CD4-positive, alpha-beta memory T cell (primary cell): ENCODE measurements at regions of chr13 and their contacts with region 1.

Region 1: GRCh38 chr13:41456768-41457588 is at the start of gene RGCC:
- DNase-seq: peak; percentile 96 to 97 (median 97)
- H3K4me3 ChIP-seq: peak within 1 kb of the TSS; percentile 61 to 99
- H3K4me3 Mint-ChIP-seq: peak within 1 kb of the TSS; percentile 90 to 99 (median 94)
- H3K27ac ChIP-seq: peak within 1 kb of the TSS; percentile 93
- H3K27ac Mint-ChIP-seq: peak within 1 kb of the TSS; percentile 96 to 99 (median 97)
- H3K4me1 ChIP-seq: peaks cover 38% of the 10 kb centered on the region
- H3K4me1 Mint-ChIP-seq: peaks cover 28 to 53% (median 41%) of the 10 kb centered on the region in 4 donors
- H3K27me3 ChIP-seq: no peaks in the 10 kb centered on the region
- H3K27me3 Mint-ChIP-seq: no peaks in the 10 kb centered on the region
- total RNA-seq, gene RGCC: 146 to 154 TPM

Region 2: DNA sequence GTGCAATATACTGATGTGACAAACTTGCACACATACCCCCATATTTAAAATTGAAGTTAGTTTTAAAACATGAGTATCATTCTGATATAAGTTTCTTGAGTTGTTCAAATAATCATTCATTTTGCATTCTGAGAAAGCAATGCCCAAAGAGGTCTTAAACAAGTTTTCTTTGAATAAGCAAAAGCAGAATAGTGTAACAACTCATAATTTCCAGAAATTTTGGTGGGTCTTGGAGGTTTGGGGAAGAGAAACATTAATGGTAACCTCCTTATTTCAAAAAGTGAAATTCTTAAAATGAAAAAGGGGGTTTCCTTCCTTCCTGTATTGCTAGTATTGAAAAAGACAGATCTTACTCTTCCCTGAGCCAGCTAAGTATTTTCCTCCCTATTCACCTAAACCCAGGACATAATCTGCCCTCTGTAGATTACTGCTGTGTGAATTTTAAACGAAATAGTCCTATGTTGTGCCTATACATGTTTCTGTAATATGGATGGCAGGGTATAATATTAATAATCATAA is 637.1 kb before region 1 on chr13:
- CTCF ChIA-PET with region 1: no interaction called
- POLR2A ChIA-PET with region 1: no interaction called
- intact Hi-C with region 1: no loop called
- DNase-seq: no peak
- H3K4me3 ChIP-seq: no peak overlapping the region
- H3K4me3 Mint-ChIP-seq: no peak overlapping the region
- H3K27ac ChIP-seq: no peak overlapping the region
- H3K27ac Mint-ChIP-seq: no peak overlapping the region
- H3K4me1 ChIP-seq: no peaks in the 10 kb centered on the region
- H3K4me1 Mint-ChIP-seq: peaks cover 0 to 4% (median 0%) of the 10 kb centered on the region in 4 donors
- H3K27me3 ChIP-seq: no peaks in the 10 kb centered on the region
- H3K27me3 Mint-ChIP-seq: no peaks in the 10 kb centered on the region

Region 3: GRCh38 chr13:41263261-41264027 is 193.5 kb before region 1 on chr13 and contains the start of gene MTRF1:
- CTCF ChIA-PET with region 1: no interaction called
- POLR2A ChIA-PET with region 1: no interaction called
- intact Hi-C with region 1: loop called (anchors 2 kb)
- DNase-seq: peak; percentile 86 to 89 (median 87)
- H3K4me3 ChIP-seq: peak within 1 kb of the TSS; percentile 80 to 82
- H3K4me3 Mint-ChIP-seq: peak within 1 kb of the TSS; percentile 94 to 99 (median 98)
- H3K27ac ChIP-seq: peak within 1 kb of the TSS; percentile 67
- H3K27ac Mint-ChIP-seq: peak within 1 kb of the TSS; percentile 88 to 99 (median 98)
- H3K4me1 ChIP-seq: peaks cover 19% of the 10 kb centered on the region
- H3K4me1 Mint-ChIP-seq: peaks cover 13 to 18% (median 15%) of the 10 kb centered on the region in 4 donors
- H3K27me3 ChIP-seq: no peaks in the 10 kb centered on the region
- H3K27me3 Mint-ChIP-seq: no peaks in the 10 kb centered on the region
- total RNA-seq, gene MTRF1: 29.5 to 30.1 TPM

Region 4: GRCh38 chr13:41411522-41411921 is 45.5 kb before region 1 on chr13:
- CTCF ChIA-PET with region 1: interaction called, 14 read pairs
- POLR2A ChIA-PET with region 1: interaction called, 3 read pairs
- intact Hi-C with region 1: loop called (anchors 2 kb)
- DNase-seq: peak in 4 of 5 donors; percentile 29 to 42 (median 34)
- H3K4me3 ChIP-seq: no peak overlapping the region
- H3K4me3 Mint-ChIP-seq: peak overlapping the region in 1 of 8 donors; percentile 14
- H3K27ac ChIP-seq: no peak overlapping the region
- H3K27ac Mint-ChIP-seq: peak overlapping the region in 3 of 7 donors; percentile 25 to 80 (median 70)
- H3K4me1 ChIP-seq: no peaks in the 10 kb centered on the region
- H3K4me1 Mint-ChIP-seq: peaks cover 0 to 7% (median under 1%) of the 10 kb centered on the region in 4 donors
- H3K27me3 ChIP-seq: no peaks in the 10 kb centered on the region
- H3K27me3 Mint-ChIP-seq: no peaks in the 10 kb centered on the region

Region 5: DNA sequence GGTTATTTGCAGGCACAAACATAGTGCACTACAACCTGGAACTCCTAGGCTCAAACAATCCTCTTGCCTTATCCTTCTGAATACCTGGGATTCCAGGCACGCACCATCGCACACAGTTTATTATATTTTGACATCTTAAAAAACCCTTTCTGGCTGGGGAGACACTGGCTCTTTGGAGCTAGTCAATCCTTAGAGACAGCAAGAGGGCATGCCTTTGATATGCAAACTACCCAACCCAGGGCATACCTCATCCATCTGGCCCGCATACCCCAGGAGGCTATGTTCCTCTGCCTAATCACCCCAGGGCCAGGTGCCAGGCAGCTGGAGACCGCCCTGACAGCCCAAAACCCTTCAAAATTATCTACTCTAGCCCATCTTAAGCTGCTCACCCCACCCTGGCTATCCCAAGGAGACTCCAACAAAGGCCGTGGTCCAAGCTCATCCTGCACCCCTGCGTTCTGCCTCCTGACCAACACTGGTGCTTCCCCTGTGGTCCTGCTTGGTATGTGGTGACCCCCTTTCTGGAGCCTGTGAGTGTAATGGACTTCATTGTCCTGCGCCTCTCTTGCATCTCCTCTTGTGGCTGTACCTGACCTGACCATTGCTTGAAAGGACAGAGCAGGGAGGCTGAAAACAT is 86.8 kb after region 1 on chr13:
- CTCF ChIA-PET with region 1: interaction called, 4 read pairs
- POLR2A ChIA-PET with region 1: interaction called, 19 read pairs
- intact Hi-C with region 1: loop called (anchors 2 kb)
- DNase-seq: no peak
- H3K4me3 ChIP-seq: no peak overlapping the region
- H3K4me3 Mint-ChIP-seq: no peak overlapping the region
- H3K27ac ChIP-seq: no peak overlapping the region
- H3K27ac Mint-ChIP-seq: peak overlapping the region in 1 of 7 donors; percentile 22
- H3K4me1 ChIP-seq: peaks cover 18% of the 10 kb centered on the region
- H3K4me1 Mint-ChIP-seq: peaks cover 15 to 32% (median 18%) of the 10 kb centered on the region in 4 donors
- H3K27me3 ChIP-seq: no peaks in the 10 kb centered on the region
- H3K27me3 Mint-ChIP-seq: no peaks in the 10 kb centered on the region

Region 6: DNA sequence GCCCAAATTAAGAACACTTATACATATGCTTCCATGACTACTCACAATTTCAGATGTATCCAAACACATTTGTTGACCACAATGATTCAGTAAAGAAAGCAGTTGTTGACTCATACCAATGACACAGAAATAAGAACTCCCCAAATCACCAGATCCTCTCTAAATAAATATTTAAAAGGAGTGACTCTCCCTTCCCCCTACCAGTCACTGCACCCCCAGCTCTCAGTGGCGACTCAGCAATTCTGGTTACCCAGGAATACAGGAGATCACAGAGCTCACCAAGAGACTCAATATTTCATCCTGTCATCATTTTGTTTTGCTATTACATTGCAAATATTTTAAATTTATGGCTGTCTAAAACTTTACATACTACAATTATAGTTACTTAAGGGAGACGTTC is 131.9 kb after region 1 on chr13:
- CTCF ChIA-PET with region 1: interaction called, 29 read pairs
- POLR2A ChIA-PET with region 1: interaction called, 4 read pairs
- intact Hi-C with region 1: loop called (anchors 1 kb)
- DNase-seq: no peak
- H3K4me3 ChIP-seq: no peak overlapping the region
- H3K4me3 Mint-ChIP-seq: no peak overlapping the region
- H3K27ac ChIP-seq: no peak overlapping the region
- H3K27ac Mint-ChIP-seq: peak overlapping the region in 1 of 7 donors; percentile 15
- H3K4me1 ChIP-seq: no peaks in the 10 kb centered on the region
- H3K4me1 Mint-ChIP-seq: peaks cover 0 to 3% (median 0%) of the 10 kb centered on the region in 4 donors
- H3K27me3 ChIP-seq: no peaks in the 10 kb centered on the region
- H3K27me3 Mint-ChIP-seq: no peaks in the 10 kb centered on the region

Region 7: DNA sequence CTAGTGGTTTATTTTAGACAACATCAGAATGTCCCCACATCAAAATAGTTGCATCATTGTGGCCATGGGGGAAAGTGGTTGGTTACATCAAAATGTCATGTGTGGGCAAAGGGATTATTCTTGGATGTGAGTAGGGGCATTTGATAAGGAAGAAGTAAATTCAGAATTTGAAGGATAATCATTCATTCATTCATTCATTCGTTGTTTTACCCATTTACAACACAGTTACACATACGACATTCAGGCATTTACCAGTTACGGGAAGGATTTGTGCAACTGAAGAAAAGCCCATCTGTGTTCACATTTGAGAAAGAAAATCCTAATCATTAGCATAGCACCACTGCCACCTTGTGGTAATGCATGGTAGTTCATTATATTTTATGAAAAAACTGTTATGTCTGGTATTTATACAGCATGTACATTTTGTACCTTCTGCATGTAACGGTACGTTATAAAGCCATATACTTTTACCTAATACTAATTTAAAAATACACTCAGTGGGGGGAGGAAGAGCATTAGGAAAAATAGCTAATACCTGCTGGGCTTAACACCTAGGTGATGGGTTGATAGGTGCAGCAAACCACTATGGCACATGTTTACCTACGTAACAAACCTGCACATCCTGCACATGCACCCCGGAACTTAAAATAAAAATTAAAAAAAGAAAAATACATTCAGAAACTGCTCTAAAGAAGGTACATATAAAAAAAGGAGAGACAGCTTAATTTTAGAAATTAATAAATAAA is 653.6 kb after region 1 on chr13:
- CTCF ChIA-PET with region 1: interaction called, 5 read pairs
- POLR2A ChIA-PET with region 1: no interaction called
- intact Hi-C with region 1: loop called (anchors 1 kb)
- DNase-seq: peak in 4 of 5 donors; percentile 63 to 68 (median 64)
- H3K4me3 ChIP-seq: no peak overlapping the region
- H3K4me3 Mint-ChIP-seq: peak overlapping the region in 1 of 8 donors; percentile 5
- H3K27ac ChIP-seq: no peak overlapping the region
- H3K27ac Mint-ChIP-seq: peak overlapping the region in 1 of 7 donors; percentile 24
- H3K4me1 ChIP-seq: peaks cover 6% of the 10 kb centered on the region
- H3K4me1 Mint-ChIP-seq: peaks cover 7 to 8% (median 7%) of the 10 kb centered on the region in 4 donors
- H3K27me3 ChIP-seq: no peaks in the 10 kb centered on the region
- H3K27me3 Mint-ChIP-seq: no peaks in the 10 kb centered on the region